ENCODE measurements at regions of chr12 and their contacts with region 1.

Region 1: GRCh38 chr12:98572010-98572409 is 21.5 kb upstream of the SLC25A3 start:
- DNase-seq: no peak
- ATAC-seq: no peak
- H3K4me3 Mint-ChIP-seq: no peak overlapping the region
- H3K27ac Mint-ChIP-seq: no peak overlapping the region
- H3K4me1 Mint-ChIP-seq: no peaks in the 10 kb centered on the region
- H3K27me3 Mint-ChIP-seq: no peaks in the 10 kb centered on the region
- CTCF ChIP-seq: no peak

Region 2: GRCh38 chr12:98332642-98333041 is 239.4 kb before region 1 on chr12:
- CTCF ChIA-PET with region 1: no interaction called
- POLR2A ChIA-PET with region 1: no interaction called
- intact Hi-C with region 1: no loop called
- DNase-seq: no peak
- ATAC-seq: no peak
- H3K4me3 Mint-ChIP-seq: no peak overlapping the region
- H3K27ac Mint-ChIP-seq: no peak overlapping the region
- H3K4me1 Mint-ChIP-seq: no peaks in the 10 kb centered on the region
- H3K27me3 Mint-ChIP-seq: peaks cover 8% of the 10 kb centered on the region
- CTCF ChIP-seq: no peak

Region 3: DNA sequence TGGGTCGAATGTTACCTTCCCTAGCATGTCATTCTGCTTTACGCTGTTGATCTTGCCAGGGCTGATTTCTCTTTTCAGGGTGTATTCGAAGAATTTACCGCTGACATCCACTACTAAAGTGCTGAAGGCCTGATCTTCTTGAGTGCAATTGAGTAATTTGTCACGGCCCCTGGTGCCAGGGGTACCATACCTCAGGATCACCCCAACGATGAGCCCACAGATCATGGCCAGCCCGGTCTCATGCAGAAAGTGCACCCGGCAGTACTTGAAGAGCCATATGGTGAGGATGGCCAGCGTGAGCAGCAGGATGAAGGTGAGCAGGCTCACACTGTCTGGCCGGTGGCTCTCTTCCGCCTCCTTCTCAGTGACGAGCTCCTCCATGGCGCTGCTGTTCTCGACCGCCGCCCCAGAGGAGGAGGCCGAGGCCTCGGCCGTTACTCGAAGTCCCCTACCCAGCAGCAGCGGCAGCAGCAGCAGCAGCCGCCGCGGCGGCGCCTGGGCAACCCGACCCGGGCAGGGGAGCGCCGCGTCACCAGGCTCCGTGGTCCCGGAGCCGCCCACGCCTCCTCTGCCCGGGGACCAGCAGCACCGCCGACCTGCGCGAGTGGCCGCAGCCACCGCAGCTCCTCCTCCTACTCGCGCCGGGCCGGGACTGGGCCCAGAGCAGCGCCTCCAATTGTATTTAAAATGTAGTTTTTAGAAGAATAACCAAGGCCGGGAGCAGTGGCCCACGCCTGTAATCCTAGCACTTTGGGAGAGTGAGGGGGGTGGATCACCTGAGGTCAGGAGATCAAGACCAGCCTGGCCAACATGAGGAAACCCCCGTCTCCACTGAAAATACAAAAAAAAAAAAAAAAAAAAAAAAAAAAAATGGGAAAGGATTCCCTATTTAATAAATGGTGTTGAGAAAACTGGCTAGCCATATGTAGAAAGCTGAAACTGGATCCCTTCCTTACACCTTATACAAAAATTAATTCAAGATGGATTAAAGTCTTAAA is 115.1 kb before region 1 on chr12:
- CTCF ChIA-PET with region 1: no interaction called
- POLR2A ChIA-PET with region 1: no interaction called
- intact Hi-C with region 1: no loop called
- DNase-seq: peak; percentile 54
- ATAC-seq: peak; percentile 81
- H3K4me3 Mint-ChIP-seq: no peak overlapping the region
- H3K27ac Mint-ChIP-seq: no peak overlapping the region
- H3K4me1 Mint-ChIP-seq: peaks cover 10% of the 10 kb centered on the region
- H3K27me3 Mint-ChIP-seq: peaks cover 28% of the 10 kb centered on the region
- CTCF ChIP-seq: no peak

Region 4: GRCh38 chr12:98544751-98545150 is 27.3 kb before region 1 on chr12:
- CTCF ChIA-PET with region 1: interaction called, 20 read pairs
- POLR2A ChIA-PET with region 1: interaction called, 5 read pairs
- intact Hi-C with region 1: no loop called
- DNase-seq: no peak
- ATAC-seq: no peak
- H3K4me3 Mint-ChIP-seq: no peak overlapping the region
- H3K27ac Mint-ChIP-seq: no peak overlapping the region
- H3K4me1 Mint-ChIP-seq: peaks cover 14% of the 10 kb centered on the region
- H3K27me3 Mint-ChIP-seq: no peaks in the 10 kb centered on the region
- CTCF ChIP-seq: no peak

Region 5: DNA sequence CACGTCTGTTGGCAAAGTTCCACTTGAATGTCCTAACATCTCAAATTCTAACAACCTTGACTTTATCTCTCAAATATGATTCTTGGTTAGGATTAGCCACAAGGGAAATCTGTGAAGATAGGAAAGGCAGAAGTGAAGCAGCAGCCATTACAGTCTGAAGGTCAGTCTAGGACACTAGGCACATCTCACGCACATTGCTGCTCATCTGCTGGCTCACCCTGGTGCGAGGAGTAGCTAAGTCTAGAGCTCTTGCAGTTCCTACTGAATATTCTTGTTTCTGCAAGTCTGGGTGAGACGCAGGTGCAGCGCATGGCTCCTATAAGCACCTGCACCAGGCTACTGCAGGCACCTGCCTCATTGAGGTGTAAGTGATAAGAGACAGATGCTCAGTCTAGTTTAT is 15.1 kb after region 1 on chr12:
- CTCF ChIA-PET with region 1: interaction called, 42 read pairs
- POLR2A ChIA-PET with region 1: no interaction called
- intact Hi-C with region 1: no loop called
- DNase-seq: no peak
- ATAC-seq: no peak
- H3K4me3 Mint-ChIP-seq: no peak overlapping the region
- H3K27ac Mint-ChIP-seq: no peak overlapping the region
- H3K4me1 Mint-ChIP-seq: no peaks in the 10 kb centered on the region
- H3K27me3 Mint-ChIP-seq: no peaks in the 10 kb centered on the region
- CTCF ChIP-seq: no peak

Region 6: GRCh38 chr12:98606357-98606988 is 34.5 kb after region 1 on chr12:
- CTCF ChIA-PET with region 1: interaction called, 10 read pairs
- POLR2A ChIA-PET with region 1: no interaction called
- intact Hi-C with region 1: no loop called
- DNase-seq: no peak
- ATAC-seq: no peak
- H3K4me3 Mint-ChIP-seq: no peak overlapping the region
- H3K27ac Mint-ChIP-seq: no peak overlapping the region
- H3K4me1 Mint-ChIP-seq: peaks cover 5% of the 10 kb centered on the region
- H3K27me3 Mint-ChIP-seq: no peaks in the 10 kb centered on the region
- CTCF ChIP-seq: no peak

Region 7: DNA sequence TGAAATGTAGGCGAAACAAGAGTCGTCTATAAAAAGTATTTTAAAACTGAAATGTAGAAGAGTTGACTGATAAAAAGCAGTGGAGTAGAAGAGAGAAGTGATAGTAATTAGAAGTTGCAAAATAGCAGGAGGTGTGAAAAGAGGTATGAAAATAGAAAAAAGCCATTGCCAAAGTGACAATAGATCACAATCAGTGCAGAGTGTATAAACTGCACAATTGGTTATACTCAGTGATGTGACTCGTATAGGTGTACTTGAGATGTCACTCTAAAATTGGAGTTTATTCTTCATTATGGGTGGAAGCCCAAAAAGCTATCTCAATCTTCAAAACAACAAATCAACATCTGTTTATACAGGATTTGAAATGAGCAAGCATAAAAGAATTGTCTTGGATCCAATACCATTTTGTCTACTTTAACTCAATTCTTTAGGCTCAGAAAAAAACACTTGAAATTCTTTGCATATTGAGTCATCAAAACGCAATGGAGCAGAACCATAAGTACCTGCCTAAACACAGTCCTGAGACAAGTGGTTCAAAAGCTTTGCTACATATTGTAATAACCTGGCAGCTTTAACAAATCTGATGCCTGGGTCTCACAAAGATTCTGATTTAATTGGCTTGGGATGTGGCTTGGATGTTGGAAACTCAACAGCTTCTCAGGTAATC is 63.8 kb after region 1 on chr12:
- CTCF ChIA-PET with region 1: interaction called, 15 read pairs
- POLR2A ChIA-PET with region 1: interaction called, 3 read pairs
- intact Hi-C with region 1: no loop called
- DNase-seq: no peak
- ATAC-seq: no peak
- H3K4me3 Mint-ChIP-seq: no peak overlapping the region
- H3K27ac Mint-ChIP-seq: no peak overlapping the region
- H3K4me1 Mint-ChIP-seq: peaks cover 16% of the 10 kb centered on the region
- H3K27me3 Mint-ChIP-seq: no peaks in the 10 kb centered on the region
- CTCF ChIP-seq: no peak

Region 8: DNA sequence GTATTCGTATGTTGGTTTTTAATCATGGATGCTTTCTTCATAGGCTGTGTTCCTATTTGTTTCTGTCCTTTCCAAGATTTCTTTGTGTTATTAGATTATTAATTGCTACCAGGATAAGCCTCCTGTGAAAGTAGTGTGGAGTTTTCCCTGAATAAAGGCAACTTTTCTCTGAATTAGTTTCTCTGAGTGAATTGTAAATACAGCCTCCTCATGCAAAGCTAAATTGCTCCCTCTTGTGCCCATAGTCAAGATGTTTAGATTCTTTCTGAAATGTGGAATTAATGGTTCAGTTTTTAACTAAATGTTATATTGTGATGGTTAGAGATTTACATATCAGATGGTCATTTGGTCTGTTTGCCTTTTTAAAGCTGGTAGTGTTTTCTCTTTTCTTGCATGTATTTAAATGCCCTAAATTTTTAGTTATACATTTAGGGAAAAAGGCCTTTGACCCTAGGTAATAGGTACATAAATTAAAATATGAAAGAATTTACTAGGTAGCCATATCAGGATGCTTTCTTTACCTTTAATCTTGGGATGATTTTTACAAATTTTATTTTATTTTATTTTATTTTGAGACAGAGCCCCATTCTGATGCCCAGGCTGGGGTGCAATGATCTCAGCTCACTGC is 82.0 kb after region 1 on chr12:
- CTCF ChIA-PET with region 1: interaction called, 53 read pairs
- POLR2A ChIA-PET with region 1: no interaction called
- intact Hi-C with region 1: loop called (anchors 5 kb)
- DNase-seq: no peak
- ATAC-seq: no peak
- H3K4me3 Mint-ChIP-seq: no peak overlapping the region
- H3K27ac Mint-ChIP-seq: no peak overlapping the region
- H3K4me1 Mint-ChIP-seq: peaks cover 15% of the 10 kb centered on the region
- H3K27me3 Mint-ChIP-seq: no peaks in the 10 kb centered on the region
- CTCF ChIP-seq: peak; percentile 55

Region 9: DNA sequence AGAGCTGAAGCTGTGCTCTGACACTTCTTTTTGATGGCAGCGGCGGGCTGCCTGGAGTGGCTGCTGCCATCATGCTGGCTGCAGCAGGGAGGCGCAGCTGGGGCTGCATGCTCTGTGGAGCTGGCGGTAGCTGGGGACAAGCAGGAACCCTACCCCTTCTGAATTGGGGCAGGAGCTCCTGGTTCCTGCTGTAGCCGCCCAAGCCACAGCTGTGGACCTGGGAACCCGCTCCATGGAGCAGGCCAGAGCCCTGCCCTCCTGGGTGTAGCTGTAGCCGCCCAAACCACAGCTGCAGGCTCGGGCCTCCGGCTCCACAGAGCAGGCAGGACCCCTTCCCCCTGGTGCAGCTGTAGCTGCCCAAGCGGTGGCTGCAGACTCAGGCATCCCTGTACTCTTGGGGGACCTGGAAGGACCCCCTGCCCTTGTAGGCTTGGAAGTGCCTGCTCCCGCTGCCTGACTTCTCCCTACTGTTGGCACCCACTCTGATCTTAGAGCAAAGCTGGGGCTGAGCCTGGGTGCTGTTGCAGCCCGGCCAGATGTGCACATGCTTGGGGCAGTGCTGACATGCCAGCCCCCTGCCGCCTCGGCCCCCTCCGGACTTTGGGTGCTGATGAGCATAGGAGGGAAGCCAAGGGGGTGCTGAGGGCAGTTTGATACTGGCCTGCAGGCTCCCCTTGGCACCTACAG is 106.4 kb after region 1 on chr12:
- CTCF ChIA-PET with region 1: no interaction called
- POLR2A ChIA-PET with region 1: no interaction called
- intact Hi-C with region 1: no loop called
- DNase-seq: no peak
- ATAC-seq: no peak
- H3K4me3 Mint-ChIP-seq: no peak overlapping the region
- H3K27ac Mint-ChIP-seq: no peak overlapping the region
- H3K4me1 Mint-ChIP-seq: no peaks in the 10 kb centered on the region
- H3K27me3 Mint-ChIP-seq: no peaks in the 10 kb centered on the region
- CTCF ChIP-seq: no peak

Measured in activated CD8-positive, alpha-beta T cell treated with anti-CD3 and anti-CD28 coated beads for 36 hours (primary cell).